ENCODE measurements at regions of chr1 and their contacts with region 1.

Region 1: DNA sequence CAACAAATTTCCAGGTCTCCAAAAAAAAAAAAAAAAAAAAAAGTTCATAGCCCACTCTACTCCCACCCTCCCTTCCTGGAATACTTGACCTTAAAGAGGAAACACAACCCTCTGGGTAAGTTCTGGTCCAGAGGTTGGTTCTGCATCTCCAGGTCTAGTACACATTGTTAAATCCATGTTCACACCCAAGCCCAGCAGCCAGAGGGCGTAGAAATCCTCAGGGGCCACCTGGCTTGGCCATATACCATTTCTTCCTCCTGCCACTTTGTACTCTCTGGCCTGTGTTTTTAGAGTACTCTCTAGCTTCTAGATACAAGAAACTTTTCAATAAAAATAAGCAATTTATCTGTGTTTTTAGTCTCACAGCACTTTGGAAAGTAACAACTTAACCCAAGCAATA is 89.3 kb downstream of the PHTF1 start:
- DNase-seq: no peak
- H3K4me3 ChIP-seq: no peak overlapping the region
- H3K27ac ChIP-seq: no peak overlapping the region
- H3K4me1 ChIP-seq: no peaks in the 10 kb centered on the region
- H3K27me3 ChIP-seq: no peaks in the 10 kb centered on the region
- CTCF ChIP-seq: no peak

Region 2: DNA sequence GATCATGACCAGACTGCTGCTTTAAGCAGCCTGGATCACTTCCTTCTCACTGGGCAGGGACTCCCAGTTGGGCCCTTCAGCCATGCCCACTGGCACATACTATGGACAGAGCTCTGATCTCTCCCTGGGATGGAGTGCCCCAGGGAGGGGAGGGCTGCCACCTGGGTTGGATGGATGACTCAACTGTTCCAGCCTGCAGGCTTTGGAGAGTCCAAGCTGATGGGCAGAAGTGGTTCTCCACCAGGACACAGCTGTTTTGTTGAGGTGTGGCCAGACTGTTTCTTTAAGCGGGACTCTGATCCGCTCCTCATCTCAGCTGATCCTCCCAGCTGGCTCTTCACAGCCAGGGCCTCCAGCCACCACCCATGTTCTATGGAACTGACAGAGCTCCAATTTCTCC is 112.8 kb before region 1 on chr1:
- CTCF ChIA-PET with region 1: no interaction called
- dilution Hi-C with region 1: loop called (anchors 5 kb)
- in situ Hi-C with region 1: no loop called
- intact Hi-C with region 1: no loop called
- DNase-seq: peak; percentile 40
- H3K4me3 ChIP-seq: no peak overlapping the region
- H3K27ac ChIP-seq: no peak overlapping the region
- H3K4me1 ChIP-seq: no peaks in the 10 kb centered on the region
- H3K27me3 ChIP-seq: no peaks in the 10 kb centered on the region
- CTCF ChIP-seq: no peak

Measured in mammary epithelial cell (primary cell).